Psoas muscle (tissue), 8 donors: ENCODE measurements at regions of chr2 and their contacts with region 1.

Region 1: GRCh38 chr2:28751252-28751955 is at the start of gene PPP1CB:
- DNase-seq: peak; percentile 97 to 99
- ATAC-seq: peak; percentile 90 to 95 (median 94)
- H3K4me3 ChIP-seq: peak within 1 kb of the TSS; percentile 78
- H3K27ac ChIP-seq: peak within 1 kb of the TSS; percentile 99
- H3K4me1 ChIP-seq: peaks cover 41% of the 10 kb centered on the region
- H3K27me3 ChIP-seq: no peaks in the 10 kb centered on the region
- CTCF ChIP-seq: peak; percentile 37
- total RNA-seq, gene PPP1CB: 448 to 628 (median 556) TPM

Region 2: GRCh38 chr2:28566521-28567041 is 184.8 kb before region 1 on chr2:
- intact Hi-C with region 1: loop called in 1 of 2 experiments (anchors 2 kb)
- DNase-seq: peak; percentile 86 to 92
- ATAC-seq: peak; percentile 87 to 97 (median 90)
- H3K4me3 ChIP-seq: peak overlapping the region; percentile 70
- H3K27ac ChIP-seq: peak overlapping the region; percentile 83
- H3K4me1 ChIP-seq: peaks cover 21% of the 10 kb centered on the region
- H3K27me3 ChIP-seq: no peaks in the 10 kb centered on the region
- CTCF ChIP-seq: peak; percentile 99

Region 3: GRCh38 chr2:28594289-28595108 is 156.9 kb before region 1 on chr2:
- intact Hi-C with region 1: loop called (anchors 1 to 2 kb)
- DNase-seq: peak; percentile 87 to 92
- ATAC-seq: peak; percentile 86 to 92 (median 90)
- H3K4me3 ChIP-seq: peak overlapping the region; percentile 11
- H3K27ac ChIP-seq: peak overlapping the region; percentile 87
- H3K4me1 ChIP-seq: peaks cover 27% of the 10 kb centered on the region
- H3K27me3 ChIP-seq: no peaks in the 10 kb centered on the region
- CTCF ChIP-seq: peak; percentile 84

Region 4: DNA sequence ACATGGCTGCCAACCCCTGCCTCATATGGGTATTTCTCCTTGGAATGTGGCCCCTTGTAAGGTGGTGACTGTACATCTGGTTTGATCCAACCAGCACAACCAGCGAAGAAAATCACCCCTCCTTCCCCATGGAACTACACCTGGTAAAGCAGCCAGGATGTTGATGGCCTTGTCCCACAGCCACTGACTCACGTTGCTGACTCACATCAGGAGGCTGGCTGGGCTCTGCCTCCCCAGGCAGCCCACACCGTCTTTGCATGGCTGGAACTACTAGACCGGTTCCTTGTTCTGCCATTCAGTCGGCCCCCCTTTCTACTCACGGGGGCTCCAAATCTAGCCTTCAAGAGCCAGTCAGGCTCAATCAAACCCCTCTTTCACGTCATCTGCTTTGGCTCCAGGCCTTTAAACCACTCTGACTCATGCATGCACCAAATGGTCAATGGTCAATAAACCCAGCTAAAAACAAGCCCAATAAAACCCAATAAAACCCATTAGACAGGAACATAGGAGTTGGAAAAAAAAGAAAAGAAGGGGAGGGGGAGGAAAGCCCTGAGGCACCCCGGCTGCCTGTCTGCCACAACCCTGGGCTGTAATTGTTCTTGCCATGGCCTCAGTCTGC is 140.7 kb before region 1 on chr2:
- intact Hi-C with region 1: loop called in 1 of 2 experiments (anchors 5 kb)
- DNase-seq: peak; percentile 64 to 83
- ATAC-seq: peak; percentile 66 to 77 (median 72)
- H3K4me3 ChIP-seq: peak overlapping the region; percentile 5
- H3K27ac ChIP-seq: peak overlapping the region; percentile 84
- H3K4me1 ChIP-seq: peaks cover 68% of the 10 kb centered on the region
- H3K27me3 ChIP-seq: no peaks in the 10 kb centered on the region
- CTCF ChIP-seq: no peak

Region 5: DNA sequence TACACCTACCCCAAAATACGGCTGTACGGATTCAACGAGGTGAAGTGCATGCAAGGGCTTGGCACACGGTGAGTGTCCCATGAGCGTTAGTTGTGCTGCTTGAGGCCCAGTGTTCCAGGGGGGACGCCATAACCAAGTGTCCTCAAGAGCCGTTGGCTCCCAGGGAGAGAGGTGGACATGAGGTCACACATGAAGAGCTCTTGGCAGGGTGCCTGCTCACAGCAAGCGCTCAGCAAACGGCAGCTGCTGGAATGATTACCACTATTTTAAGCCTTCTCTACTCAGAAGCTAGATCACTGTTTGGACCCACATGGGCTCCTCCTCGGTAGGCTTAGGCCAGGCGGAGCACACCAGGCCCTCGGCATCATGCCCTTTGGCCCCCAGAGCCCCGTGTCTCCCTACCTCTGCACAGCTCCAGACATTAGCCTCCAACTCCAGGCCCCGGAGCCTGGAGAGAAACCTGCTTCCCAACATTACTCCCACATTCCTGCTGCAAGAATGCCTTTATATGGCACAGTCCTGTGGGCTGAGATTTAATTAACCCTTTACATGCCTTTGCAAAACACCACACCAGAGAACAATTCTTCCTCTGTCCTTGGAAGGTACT is 68.2 kb before region 1 on chr2:
- intact Hi-C with region 1: loop called in 1 of 2 experiments (anchors 2 kb)
- DNase-seq: peak; percentile 86 to 94
- ATAC-seq: peak; percentile 83 to 95 (median 86)
- H3K4me3 ChIP-seq: no peak overlapping the region
- H3K27ac ChIP-seq: peak overlapping the region; percentile 64
- H3K4me1 ChIP-seq: peaks cover 14% of the 10 kb centered on the region
- H3K27me3 ChIP-seq: no peaks in the 10 kb centered on the region
- CTCF ChIP-seq: no peak

Region 6: GRCh38 chr2:28716265-28716867 is 35.0 kb before region 1 on chr2:
- intact Hi-C with region 1: loop called in 1 of 2 experiments (anchors 5 kb)
- DNase-seq: peak; percentile 32 to 61
- ATAC-seq: peak; percentile 75 to 86 (median 80)
- H3K4me3 ChIP-seq: no peak overlapping the region
- H3K27ac ChIP-seq: peak overlapping the region; percentile 94
- H3K4me1 ChIP-seq: peaks cover 15% of the 10 kb centered on the region
- H3K27me3 ChIP-seq: no peaks in the 10 kb centered on the region
- CTCF ChIP-seq: no peak

Region 7: GRCh38 chr2:28735511-28735910 is 15.9 kb before region 1 on chr2:
- intact Hi-C with region 1: loop called in 1 of 2 experiments (anchors 2 kb)
- DNase-seq: no peak
- ATAC-seq: peak; percentile 11 to 43 (median 24)
- H3K4me3 ChIP-seq: peak overlapping the region; percentile 36
- H3K27ac ChIP-seq: peak overlapping the region; percentile 81
- H3K4me1 ChIP-seq: peaks cover 17% of the 10 kb centered on the region
- H3K27me3 ChIP-seq: no peaks in the 10 kb centered on the region
- CTCF ChIP-seq: no peak

Region 8: DNA sequence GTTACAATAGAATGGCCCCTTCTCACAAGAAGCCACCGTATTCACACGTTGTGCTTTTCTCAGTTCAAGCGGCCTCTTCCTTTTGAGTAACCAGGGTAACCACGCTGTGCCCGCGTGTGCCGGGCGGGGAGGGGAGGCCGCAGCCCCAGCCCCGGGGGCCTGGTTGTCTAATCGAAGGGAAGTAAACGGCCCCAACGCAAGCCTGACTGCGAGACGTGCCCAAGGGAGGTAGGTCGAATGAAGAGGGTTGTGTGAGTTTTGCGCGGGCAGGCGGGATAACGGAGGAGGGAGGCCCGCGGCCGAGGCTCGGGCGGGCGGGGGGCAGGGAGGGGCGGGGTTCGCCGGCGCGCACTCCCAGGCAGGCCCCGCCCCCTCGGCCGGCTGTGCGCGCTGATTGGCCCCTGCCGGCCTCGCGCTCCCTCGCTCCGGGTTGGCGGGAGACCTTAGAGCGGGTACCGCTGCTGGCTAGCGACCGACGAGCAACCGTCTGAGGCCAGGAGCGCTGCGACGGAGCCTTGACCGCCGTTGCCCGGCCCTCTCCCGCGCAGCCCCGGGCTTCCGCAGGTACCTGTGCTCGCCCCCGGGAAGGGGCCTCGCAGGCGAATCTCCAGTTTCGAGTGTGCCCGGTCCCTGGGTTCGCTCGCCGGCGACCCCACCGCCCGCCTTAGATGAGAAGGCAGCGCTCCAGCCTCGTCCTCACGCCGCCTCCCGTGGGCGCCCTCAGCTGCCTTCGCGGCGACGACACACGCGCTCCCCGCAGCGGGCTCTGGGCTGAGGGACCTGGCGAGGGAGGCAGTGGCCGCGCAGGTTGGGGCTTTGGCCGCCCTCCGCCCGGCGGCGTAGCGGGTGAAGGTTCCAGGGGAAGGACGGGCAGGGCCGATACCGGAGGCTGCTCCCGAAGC is 59.2 kb after region 1 on chr2 and contains the start of gene SPDYA:
- intact Hi-C with region 1: no loop called
- DNase-seq: peak; percentile 76 to 85
- ATAC-seq: peak; percentile 87 to 92 (median 88)
- H3K4me3 ChIP-seq: peak within 1 kb of the TSS; percentile 72
- H3K27ac ChIP-seq: no peak within 1 kb of the TSS
- H3K4me1 ChIP-seq: peaks cover 7% of the 10 kb centered on the region
- H3K27me3 ChIP-seq: no peaks in the 10 kb centered on the region
- CTCF ChIP-seq: peak; percentile 3
- total RNA-seq, gene SPDYA: 0.17 to 0.61 (median 0.31) TPM

Region 9: GRCh38 chr2:29596584-29596983 is 845.2 kb after region 1 on chr2:
- intact Hi-C with region 1: no loop called
- DNase-seq: no peak
- ATAC-seq: peak in 2 of 4 donors; percentile 47 to 59
- H3K4me3 ChIP-seq: no peak overlapping the region
- H3K27ac ChIP-seq: peak overlapping the region; percentile 23
- H3K4me1 ChIP-seq: peaks cover 11% of the 10 kb centered on the region
- H3K27me3 ChIP-seq: no peaks in the 10 kb centered on the region
- CTCF ChIP-seq: no peak